Right cardiac atrium (tissue), 5 donors: ENCODE measurements at regions of chr10 and their contacts with region 1.

Region 1: DNA sequence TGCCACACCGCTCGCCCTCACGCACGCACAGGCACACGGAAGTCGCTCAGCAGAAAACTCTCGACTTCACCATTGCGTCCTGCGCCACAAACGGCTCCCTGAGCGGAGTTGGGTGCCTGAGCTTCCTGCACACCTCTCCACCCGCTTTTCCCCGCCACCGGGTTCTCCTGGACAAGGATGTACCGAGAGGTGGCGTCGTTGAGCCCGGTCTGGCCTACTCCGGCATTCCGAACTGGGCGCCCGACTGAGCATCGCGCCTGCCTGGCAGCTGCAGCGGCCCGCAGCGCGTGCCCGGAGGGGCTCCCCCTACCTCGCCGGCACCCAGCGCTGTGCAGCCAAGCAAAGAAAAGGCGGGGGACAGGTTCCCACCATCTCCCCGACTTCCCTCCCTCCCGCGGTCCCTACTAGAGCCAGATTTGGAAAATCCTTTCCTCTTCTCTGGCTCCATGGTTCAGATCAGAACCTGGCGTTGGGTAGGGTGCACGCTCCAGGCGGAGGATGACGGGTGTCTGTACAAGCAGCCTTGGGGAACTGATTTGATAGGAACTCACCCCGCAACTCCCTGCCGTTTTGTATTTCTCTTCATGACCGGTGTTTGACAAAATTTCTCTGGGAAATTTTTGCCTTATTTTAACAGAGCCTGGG is 1.7 kb downstream of the SORCS3 start:
- DNase-seq: peak in 2 of 3 donors; percentile 53 to 64
- ATAC-seq: peak in 1 of 2 donors; percentile 34
- H3K4me3 ChIP-seq: peak overlapping the region; percentile 30
- H3K27ac ChIP-seq: no peak overlapping the region
- H3K4me1 ChIP-seq: no peaks in the 10 kb centered on the region
- H3K27me3 ChIP-seq: no peaks in the 10 kb centered on the region

Region 2: DNA sequence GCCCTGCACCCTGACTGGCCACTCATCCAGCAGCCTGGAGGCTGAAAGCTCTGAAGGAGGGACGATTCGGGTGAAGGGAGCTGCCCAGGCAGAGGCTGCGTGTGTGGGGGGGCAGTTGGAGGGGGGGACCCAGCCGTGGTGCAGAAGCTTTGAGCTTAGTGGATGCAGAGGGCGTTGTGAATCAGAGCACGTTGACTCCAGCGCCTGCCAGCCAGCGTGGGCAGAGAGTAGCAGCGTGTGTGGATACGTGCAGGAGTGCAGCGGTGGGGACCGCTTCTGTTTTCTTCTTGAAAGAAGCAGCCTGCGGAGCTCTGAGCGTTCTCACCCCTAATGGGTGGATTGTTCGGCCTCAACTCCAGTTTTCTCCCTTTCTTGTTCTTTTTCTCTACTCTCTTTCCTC is 45.5 kb after region 1 on chr10:
- intact Hi-C with region 1: no loop called
- DNase-seq: no peak
- ATAC-seq: no peak
- H3K4me3 ChIP-seq: no peak overlapping the region
- H3K27ac ChIP-seq: no peak overlapping the region
- H3K4me1 ChIP-seq: no peaks in the 10 kb centered on the region
- H3K27me3 ChIP-seq: no peaks in the 10 kb centered on the region

Region 3: GRCh38 chr10:104707602-104708459 is 65.1 kb after region 1 on chr10:
- intact Hi-C with region 1: no loop called
- DNase-seq: no peak
- ATAC-seq: no peak
- H3K4me3 ChIP-seq: no peak overlapping the region
- H3K27ac ChIP-seq: no peak overlapping the region
- H3K4me1 ChIP-seq: no peaks in the 10 kb centered on the region
- H3K27me3 ChIP-seq: no peaks in the 10 kb centered on the region

Region 4: GRCh38 chr10:104910712-104911111 is 267.9 kb after region 1 on chr10:
- intact Hi-C with region 1: loop called in 1 of 4 experiments (anchors 5 kb)
- DNase-seq: no peak
- ATAC-seq: no peak
- H3K4me3 ChIP-seq: no peak overlapping the region
- H3K27ac ChIP-seq: no peak overlapping the region
- H3K4me1 ChIP-seq: no peaks in the 10 kb centered on the region
- H3K27me3 ChIP-seq: no peaks in the 10 kb centered on the region

Region 5: GRCh38 chr10:104925232-104925851 is 282.6 kb after region 1 on chr10:
- intact Hi-C with region 1: loop called in 2 of 4 experiments (anchors 10 kb)
- DNase-seq: no peak
- ATAC-seq: no peak
- H3K4me3 ChIP-seq: no peak overlapping the region
- H3K27ac ChIP-seq: no peak overlapping the region
- H3K4me1 ChIP-seq: no peaks in the 10 kb centered on the region
- H3K27me3 ChIP-seq: no peaks in the 10 kb centered on the region